Gastrocnemius medialis (tissue), 4 donors: ENCODE measurements at regions of chr21 and their contacts with region 1.

Region 1: GRCh38 chr21:40143822-40144525 is 276.7 kb downstream of the PCP4 start:
- DNase-seq: no peak
- ATAC-seq: no peak
- H3K4me3 ChIP-seq: no peak overlapping the region
- H3K27ac ChIP-seq: no peak overlapping the region
- H3K4me1 ChIP-seq: no peaks in the 10 kb centered on the region
- H3K27me3 ChIP-seq: no peaks in the 10 kb centered on the region
- CTCF ChIP-seq: peak in 4 of 5 experiments; percentile 18 to 46 (median 42)
- POLR2A ChIP-seq: no peak

Region 2: DNA sequence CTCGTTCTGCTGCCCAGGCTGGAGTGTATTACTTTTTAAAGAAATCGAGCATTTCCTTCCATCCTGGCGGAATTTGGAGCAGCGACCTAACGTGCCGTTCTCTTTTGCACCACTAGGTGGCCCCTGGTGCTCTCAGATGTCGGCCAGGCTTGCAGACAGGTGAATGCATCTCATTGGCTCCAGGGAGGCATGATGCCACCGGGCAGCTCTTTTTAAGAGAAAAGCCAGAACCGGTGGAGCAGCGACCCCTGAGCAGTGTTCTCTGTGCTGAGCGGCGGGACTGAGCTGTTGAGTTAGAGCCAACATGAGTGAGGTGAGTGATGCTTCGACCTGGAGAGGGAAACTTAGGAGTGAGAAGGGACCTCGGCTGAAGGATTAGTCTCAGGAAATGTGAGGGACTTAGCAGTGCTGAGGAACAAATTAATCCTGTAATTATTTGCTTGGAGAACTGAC is 276.8 kb before region 1 on chr21 and contains the start of gene PCP4:
- in situ Hi-C with region 1: loop called in 1 of 4 experiments (anchors 25 kb)
- intact Hi-C with region 1: no loop called
- DNase-seq: no peak
- ATAC-seq: no peak
- H3K4me3 ChIP-seq: no peak within 1 kb of the TSS
- H3K27ac ChIP-seq: no peak within 1 kb of the TSS
- H3K4me1 ChIP-seq: no peaks in the 10 kb centered on the region
- H3K27me3 ChIP-seq: peaks cover 0 to 5% (median 0%) of the 10 kb centered on the region in 3 donors
- CTCF ChIP-seq: peak in 3 of 5 experiments; percentile 34 to 62 (median 61)
- POLR2A ChIP-seq: no peak
- total RNA-seq, gene PCP4: not detected

Region 3: DNA sequence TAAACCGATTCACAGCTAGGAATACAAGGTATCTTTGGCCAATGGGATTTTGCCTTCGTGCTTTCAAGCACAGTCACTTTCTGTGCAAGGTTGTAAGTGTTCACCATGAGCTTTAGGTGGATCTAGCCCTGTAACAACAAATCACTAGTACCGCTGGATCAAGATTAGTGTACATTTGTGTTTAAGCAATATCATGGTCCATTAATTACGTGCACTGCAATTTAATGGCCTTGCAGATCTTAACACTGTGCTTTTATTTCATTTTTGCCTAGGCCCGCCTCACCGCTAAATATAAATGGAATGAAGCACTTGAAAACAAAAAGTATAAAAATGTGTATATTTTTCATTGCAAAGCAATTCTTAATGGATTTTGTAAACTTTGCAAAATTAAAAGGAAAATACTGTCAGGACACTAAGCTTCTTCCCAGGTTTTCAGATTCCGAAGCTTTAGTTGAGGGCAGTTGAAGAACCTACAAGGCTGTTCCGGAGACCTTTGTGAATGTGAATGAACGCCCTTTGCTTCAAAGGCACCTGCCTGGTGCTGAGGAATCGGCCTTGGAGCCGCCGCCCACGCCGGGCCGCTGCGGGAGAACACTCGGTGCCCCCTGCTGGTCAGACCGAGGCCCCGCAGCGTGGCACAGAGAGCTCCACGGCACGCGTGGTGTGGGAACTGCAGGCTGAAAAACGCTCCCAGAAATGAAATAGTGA is 242.1 kb after region 1 on chr21:
- in situ Hi-C with region 1: loop called in 1 of 4 experiments (anchors 10 kb)
- intact Hi-C with region 1: no loop called
- DNase-seq: no peak
- ATAC-seq: no peak
- H3K4me3 ChIP-seq: no peak overlapping the region
- H3K27ac ChIP-seq: no peak overlapping the region
- H3K4me1 ChIP-seq: no peaks in the 10 kb centered on the region
- H3K27me3 ChIP-seq: no peaks in the 10 kb centered on the region
- CTCF ChIP-seq: peak in 4 of 5 experiments; percentile 8 to 46 (median 38)
- POLR2A ChIP-seq: no peak

Region 4: DNA sequence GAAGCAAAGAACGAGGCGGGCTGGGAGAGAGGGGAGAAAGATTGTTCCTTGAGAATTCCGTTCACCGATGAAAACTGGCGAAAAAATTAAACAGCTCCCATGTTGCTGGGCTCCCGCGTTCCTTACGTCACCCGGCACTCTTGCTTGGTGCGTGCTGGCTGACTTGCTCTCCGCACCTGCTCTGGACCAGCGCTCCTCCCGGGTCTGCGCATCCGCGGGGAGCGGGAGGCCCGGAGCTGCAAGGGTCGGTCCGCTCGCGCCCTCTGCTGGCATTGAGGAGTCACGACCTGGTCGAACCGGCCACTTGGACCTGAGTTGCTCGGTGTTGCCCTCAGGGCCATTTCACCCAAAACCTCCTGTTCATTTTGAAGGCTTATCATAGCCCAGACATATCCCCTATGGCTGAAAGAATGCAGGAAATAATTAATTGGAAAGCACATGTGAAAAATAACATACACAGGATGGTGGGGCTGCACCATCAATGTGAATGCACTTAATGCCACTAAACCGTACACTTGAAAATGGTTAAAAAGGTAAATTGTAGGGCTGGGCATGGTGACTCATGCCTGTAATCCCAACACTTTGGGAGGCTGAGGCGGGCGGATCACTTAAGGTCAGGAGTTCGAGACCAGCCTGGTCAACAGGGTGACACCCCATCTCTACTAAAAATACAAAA is 925.1 kb after region 1 on chr21:
- in situ Hi-C with region 1: loop called in 1 of 4 experiments (anchors 25 kb)
- intact Hi-C with region 1: no loop called
- DNase-seq: peak; percentile 31 to 35
- ATAC-seq: no peak
- H3K4me3 ChIP-seq: peak overlapping the region in 1 of 4 donors; percentile 25
- H3K27ac ChIP-seq: no peak overlapping the region
- H3K4me1 ChIP-seq: peaks cover 0 to 4% of the 10 kb centered on the region in 2 donors
- H3K27me3 ChIP-seq: peaks cover 4 to 14% (median 8%) of the 10 kb centered on the region in 3 donors
- CTCF ChIP-seq: peak in 4 of 5 experiments; percentile 38 to 67 (median 56)
- POLR2A ChIP-seq: no peak